ENCODE measurements at regions of chr9 and their contacts with region 1.

Region 1: GRCh38 chr9:115629879-115630840 is 512.2 kb upstream of the TNC start:
- DNase-seq: no peak
- H3K4me3 ChIP-seq: no peak overlapping the region
- H3K4me3 Mint-ChIP-seq: no peak overlapping the region
- H3K27ac ChIP-seq: no peak overlapping the region
- H3K27ac Mint-ChIP-seq: no peak overlapping the region
- H3K4me1 ChIP-seq: no peaks in the 10 kb centered on the region
- H3K4me1 Mint-ChIP-seq: no peaks in the 10 kb centered on the region
- H3K27me3 ChIP-seq: no peaks in the 10 kb centered on the region
- H3K27me3 Mint-ChIP-seq: no peaks in the 10 kb centered on the region
- CTCF ChIP-seq: no peak

Region 2: GRCh38 chr9:115680231-115680630 is 50.1 kb after region 1 on chr9:
- intact Hi-C with region 1: loop called in 1 of 2 experiments (anchors 10 kb)
- DNase-seq: no peak
- H3K4me3 ChIP-seq: no peak overlapping the region
- H3K4me3 Mint-ChIP-seq: no peak overlapping the region
- H3K27ac ChIP-seq: no peak overlapping the region
- H3K27ac Mint-ChIP-seq: no peak overlapping the region
- H3K4me1 ChIP-seq: no peaks in the 10 kb centered on the region
- H3K4me1 Mint-ChIP-seq: no peaks in the 10 kb centered on the region
- H3K27me3 ChIP-seq: no peaks in the 10 kb centered on the region
- H3K27me3 Mint-ChIP-seq: peaks cover 0 to 3% (median 0%) of the 10 kb centered on the region in 3 donors
- CTCF ChIP-seq: no peak

Region 3: GRCh38 chr9:116337015-116337414 is 706.9 kb after region 1 on chr9:
- intact Hi-C with region 1: no loop called
- DNase-seq: no peak
- H3K4me3 ChIP-seq: no peak overlapping the region
- H3K4me3 Mint-ChIP-seq: no peak overlapping the region
- H3K27ac ChIP-seq: no peak overlapping the region
- H3K27ac Mint-ChIP-seq: no peak overlapping the region
- H3K4me1 ChIP-seq: no peaks in the 10 kb centered on the region
- H3K4me1 Mint-ChIP-seq: no peaks in the 10 kb centered on the region
- H3K27me3 ChIP-seq: no peaks in the 10 kb centered on the region
- H3K27me3 Mint-ChIP-seq: peaks cover 1 to 9% (median 5%) of the 10 kb centered on the region in 3 donors
- CTCF ChIP-seq: no peak

Measured in CD14-positive monocyte (primary cell).